AG04449 (cell line): ENCODE measurements at regions of chr7 and their contacts with region 1.

Region 1: DNA sequence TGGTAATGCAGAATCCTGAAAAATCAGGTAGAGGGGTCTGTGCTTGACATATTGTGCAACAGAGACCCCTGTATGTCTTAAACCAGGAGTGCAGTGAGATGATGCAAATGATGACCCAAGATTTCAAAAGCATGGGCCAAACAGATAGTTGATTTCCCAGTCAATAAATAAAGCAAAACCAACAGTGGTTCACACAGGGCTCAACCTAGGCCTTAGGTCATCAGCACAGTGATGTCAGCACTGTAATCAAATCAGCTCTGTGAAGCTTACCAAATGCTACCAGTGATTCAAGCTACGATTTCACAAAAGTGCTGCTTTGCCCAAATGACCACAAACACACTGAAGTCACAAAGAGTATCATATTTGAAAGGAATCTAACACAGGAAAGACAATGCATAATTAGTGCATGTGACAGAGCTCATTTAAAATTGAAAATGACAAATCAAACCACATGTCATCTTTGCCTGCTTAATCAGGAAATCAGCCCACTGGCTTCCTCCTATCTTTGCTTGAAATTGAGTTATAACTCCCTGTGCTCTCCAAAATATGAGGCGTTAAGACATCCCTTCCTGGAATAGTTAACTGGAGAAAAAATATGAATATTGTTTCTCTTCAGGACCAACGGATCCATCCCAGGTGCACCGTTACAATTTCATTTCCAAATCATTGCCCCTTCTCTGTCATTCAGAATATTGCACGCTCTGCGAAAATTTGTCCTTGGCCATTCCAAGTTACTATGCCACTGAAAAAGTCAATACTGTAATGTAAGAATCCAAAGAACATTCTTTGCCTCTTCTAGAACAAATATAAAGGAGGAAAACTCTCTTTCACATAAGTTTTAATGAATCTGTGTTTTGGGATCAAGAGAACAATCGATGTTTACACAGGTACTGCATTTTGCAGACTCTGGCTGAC is 41.9 kb upstream of the ASL start:
- DNase-seq: no peak
- H3K4me3 ChIP-seq: no peak overlapping the region
- CTCF ChIP-seq: no peak

Region 2: GRCh38 chr7:65846009-65846570 is 187.6 kb before region 1 on chr7:
- CTCF ChIA-PET with region 1: no interaction called
- POLR2A ChIA-PET with region 1: no interaction called
- DNase-seq: no peak
- H3K4me3 ChIP-seq: no peak overlapping the region
- CTCF ChIP-seq: no peak

Region 3: DNA sequence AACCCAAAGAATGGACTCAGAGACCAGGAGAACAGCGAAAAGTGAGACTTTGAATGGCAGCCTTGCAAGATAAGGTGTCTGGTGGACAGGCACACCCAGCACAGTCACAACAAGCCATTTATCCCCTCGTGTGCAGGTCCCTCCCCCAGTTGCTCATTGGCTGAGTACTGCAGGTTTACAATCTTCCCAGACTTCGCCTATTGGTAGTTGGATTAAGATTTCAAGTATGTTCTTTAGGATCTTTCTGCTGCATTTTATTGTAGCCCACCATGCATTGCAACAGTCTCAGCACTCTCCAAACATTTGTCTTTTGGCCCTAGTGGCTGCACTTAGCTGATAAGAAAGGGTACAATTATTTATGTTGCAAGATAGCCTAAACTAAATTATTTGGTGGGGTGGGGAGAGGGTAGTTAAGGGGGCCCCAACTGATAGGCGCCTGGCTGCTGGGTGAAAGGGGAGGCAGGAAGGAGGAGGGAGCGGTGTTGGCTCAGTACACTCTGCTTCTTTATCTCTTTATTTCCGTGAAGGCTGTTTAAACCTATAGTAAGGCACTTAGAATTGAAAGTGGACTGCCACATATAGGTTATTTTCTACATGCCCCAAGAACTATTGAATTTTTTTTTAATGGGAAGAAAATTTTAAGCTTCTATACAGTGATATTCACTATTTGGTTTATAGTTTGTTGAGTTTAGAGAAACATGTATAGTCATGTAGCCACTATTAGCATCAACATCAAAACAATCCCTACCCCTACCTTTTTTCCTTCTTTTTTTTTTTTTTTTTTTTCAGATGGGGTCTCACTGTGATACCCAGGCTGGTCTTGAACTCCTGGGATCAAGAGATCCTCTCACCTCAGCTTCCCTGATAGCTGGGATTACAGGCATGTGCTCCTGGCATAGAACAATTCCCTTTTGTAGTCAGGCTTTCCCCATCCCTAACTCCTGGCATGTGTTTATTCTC is 106.0 kb before region 1 on chr7:
- CTCF ChIA-PET with region 1: no interaction called
- POLR2A ChIA-PET with region 1: no interaction called
- DNase-seq: no peak
- H3K4me3 ChIP-seq: no peak overlapping the region
- CTCF ChIP-seq: no peak

Region 4: DNA sequence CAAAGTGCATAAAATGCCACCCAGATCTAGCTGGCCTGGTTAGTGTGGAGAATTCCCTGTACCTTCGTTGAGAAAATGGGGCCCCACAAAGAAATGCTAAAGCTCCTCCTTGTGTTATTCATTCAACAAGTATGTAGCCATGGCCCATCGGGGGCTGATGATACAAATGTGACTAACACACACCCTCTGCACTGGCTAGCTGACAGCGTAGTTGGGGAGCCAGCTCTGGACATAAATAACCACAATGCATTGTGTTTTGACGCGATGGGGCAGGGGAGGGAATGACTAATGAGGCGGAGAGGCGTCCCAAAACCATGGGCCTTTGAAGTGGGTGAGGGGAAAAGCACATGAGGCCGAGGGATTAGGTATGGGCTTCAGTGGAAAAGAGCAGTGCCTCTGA is 13.7 kb after region 1 on chr7:
- CTCF ChIA-PET with region 1: interaction called, 18 read pairs
- POLR2A ChIA-PET with region 1: no interaction called
- DNase-seq: peak; percentile 84
- H3K4me3 ChIP-seq: no peak overlapping the region
- CTCF ChIP-seq: no peak

Region 5: DNA sequence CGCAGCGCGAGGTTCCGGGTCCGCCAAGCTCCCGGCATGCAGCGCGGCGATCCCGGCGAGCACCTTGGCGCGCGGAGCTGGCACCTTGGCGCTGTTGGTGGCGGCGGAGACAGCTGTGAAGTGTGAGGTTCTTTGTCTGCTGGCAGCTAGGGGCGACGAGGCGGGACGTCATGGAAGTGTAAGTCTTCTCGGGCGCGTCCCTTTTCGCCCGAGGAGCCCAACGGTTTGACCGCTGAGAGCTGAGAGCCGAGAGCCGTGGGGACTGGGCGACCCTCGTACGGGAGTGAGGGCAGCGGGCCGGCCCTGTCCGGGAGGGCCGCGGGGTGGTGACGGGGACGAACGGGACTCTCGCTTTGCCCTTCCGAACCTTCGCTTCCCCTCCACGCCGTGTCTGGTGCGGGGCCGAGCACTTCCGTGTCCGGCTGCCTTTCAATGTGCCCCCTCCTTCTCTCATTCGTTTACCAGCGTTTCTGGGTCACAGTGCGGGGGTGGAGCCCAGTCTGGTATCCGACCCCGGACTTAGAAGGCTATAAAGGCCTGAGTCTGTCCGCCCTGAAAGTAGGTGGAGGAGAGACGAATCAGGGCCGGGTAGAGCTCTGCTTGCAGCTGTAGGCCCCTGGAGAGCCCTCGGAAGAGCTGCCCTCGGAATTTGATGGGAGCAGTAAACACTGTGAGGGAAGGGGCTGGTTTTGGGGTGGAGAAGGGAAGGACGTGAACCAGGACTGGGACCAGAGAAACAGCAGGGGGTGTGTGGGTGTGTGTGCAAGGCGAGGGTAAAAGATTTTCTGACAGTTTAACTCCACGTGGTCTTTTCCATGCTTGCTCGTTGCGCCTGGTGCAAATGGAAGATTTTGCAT is 81.3 kb after region 1 on chr7 and contains the start of gene CRCP:
- CTCF ChIA-PET with region 1: interaction called, 13 read pairs
- POLR2A ChIA-PET with region 1: no interaction called
- DNase-seq: no peak
- H3K4me3 ChIP-seq: peak within 1 kb of the TSS; percentile 85
- CTCF ChIP-seq: peak; percentile 56

Region 6: DNA sequence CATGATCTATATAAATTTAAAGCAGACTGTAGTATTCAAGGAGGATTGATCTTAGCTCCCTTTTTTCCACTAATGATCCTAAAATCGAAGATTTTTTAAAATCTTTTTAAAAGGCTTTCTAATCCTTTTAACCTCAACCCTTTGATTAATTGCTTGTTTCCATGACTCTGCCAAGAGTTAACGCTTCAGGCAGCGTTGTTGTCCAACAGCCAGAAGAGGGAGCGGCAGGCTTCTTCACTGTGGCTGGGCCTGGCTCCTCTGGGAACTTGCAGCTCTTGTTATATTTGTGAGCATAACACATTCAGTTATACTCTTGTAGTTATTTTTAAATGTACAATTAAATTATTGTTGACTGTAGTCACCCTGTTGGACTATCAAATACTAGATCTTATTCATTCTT is 107.2 kb after region 1 on chr7:
- CTCF ChIA-PET with region 1: interaction called, 19 read pairs
- POLR2A ChIA-PET with region 1: no interaction called
- DNase-seq: no peak
- H3K4me3 ChIP-seq: no peak overlapping the region
- CTCF ChIP-seq: peak; percentile 74

Region 7: GRCh38 chr7:66731986-66732385 is 698.3 kb after region 1 on chr7:
- CTCF ChIA-PET with region 1: no interaction called
- POLR2A ChIA-PET with region 1: no interaction called
- DNase-seq: no peak
- H3K4me3 ChIP-seq: no peak overlapping the region
- CTCF ChIP-seq: no peak